ENCODE measurements at regions of chr16 and their contacts with region 1.

Region 1: GRCh38 chr16:58515125-58515870 is at the start of gene SETD6:
- DNase-seq: peak; percentile 92 to 93
- H3K4me3 ChIP-seq: peak within 1 kb of the TSS; percentile 12 to 87 (median 70)
- H3K27ac ChIP-seq: peak within 1 kb of the TSS; percentile 18 to 74 (median 60)
- H3K4me1 ChIP-seq: peaks cover 9 to 10% of the 10 kb centered on the region in 2 donors
- H3K27me3 ChIP-seq: no peaks in the 10 kb centered on the region
- CTCF ChIP-seq: peak in 4 of 6 experiments; percentile 22 to 40 (median 30)
- POLR2A ChIP-seq: peak in 1 of 2 donors; percentile 65
- total RNA-seq, gene SETD6: 37.3 to 59.2 (median 44.4) TPM

Region 2: GRCh38 chr16:58481931-58482330 is 33.4 kb before region 1 on chr16:
- intact Hi-C with region 1: no loop called
- DNase-seq: no peak
- H3K4me3 ChIP-seq: no peak overlapping the region
- H3K27ac ChIP-seq: no peak overlapping the region
- H3K4me1 ChIP-seq: no peaks in the 10 kb centered on the region
- H3K27me3 ChIP-seq: no peaks in the 10 kb centered on the region
- CTCF ChIP-seq: no peak
- POLR2A ChIP-seq: no peak

Region 3: DNA sequence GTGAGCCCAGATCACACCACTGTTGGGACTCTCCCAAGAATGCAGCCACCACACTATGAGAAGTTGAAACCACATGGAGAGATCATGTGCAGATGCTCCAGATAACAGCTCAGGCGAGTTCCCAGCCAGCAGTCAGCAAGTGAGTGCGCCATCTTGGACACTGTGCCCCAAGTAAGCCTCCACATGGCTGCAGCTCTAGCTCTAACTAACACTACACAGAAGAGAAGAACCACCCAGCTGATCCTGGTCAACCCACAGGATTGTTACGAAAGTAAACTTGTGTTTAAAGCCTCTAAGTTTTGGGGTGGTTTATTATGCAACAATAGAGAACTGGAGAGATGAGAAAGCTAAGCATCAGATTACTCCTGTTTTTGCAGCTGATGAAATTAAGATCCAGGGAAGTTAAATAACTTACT is 143.5 kb after region 1 on chr16:
- intact Hi-C with region 1: loop called (anchors 5 kb)
- DNase-seq: no peak
- H3K4me3 ChIP-seq: no peak overlapping the region
- H3K27ac ChIP-seq: no peak overlapping the region
- H3K4me1 ChIP-seq: no peaks in the 10 kb centered on the region
- H3K27me3 ChIP-seq: no peaks in the 10 kb centered on the region
- CTCF ChIP-seq: no peak
- POLR2A ChIP-seq: no peak

Region 4: DNA sequence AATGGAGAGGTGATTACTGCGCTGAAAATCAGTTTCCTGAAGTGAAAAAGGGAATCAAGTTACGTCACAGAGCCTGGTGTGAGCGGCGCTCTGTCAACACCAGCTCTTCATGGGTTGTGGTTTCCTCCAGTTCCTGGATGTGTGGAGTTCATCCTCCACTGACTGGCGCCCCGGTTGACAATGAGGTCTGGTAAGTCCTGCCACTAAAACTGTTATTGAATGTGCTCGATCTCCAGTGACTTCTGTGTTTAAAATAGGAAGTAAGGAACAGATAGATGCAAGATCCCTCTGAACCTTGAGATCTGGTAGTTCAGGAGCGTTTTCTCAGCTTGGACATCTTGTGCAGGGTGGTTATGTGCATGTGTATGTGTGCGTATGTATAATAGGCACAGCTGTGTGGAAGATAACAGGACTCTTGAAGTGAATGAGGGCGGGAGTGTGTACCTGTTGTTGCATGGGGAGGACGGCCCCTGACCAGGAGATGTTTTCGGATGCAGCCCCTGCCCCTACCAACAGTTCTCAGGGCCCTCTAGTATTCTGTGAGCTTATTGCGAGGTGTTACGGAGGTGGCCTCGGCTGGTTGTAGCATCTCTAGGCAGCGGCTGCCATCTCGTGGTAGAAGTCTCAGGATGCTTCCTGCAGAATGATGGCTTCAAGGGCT is 240.8 kb after region 1 on chr16:
- intact Hi-C with region 1: loop called (anchors 10 kb)
- DNase-seq: peak; percentile 79 to 84
- H3K4me3 ChIP-seq: no peak overlapping the region
- H3K27ac ChIP-seq: no peak overlapping the region
- H3K4me1 ChIP-seq: no peaks in the 10 kb centered on the region
- H3K27me3 ChIP-seq: no peaks in the 10 kb centered on the region
- CTCF ChIP-seq: peak in 5 of 6 experiments; percentile 51 to 79 (median 73)
- POLR2A ChIP-seq: no peak